B cell (primary cell): ENCODE measurements at regions of chr1 and their contacts with region 1.

Region 1: GRCh38 chr1:228131766-228132165 is 8.3 kb upstream of the GUK1 start:
- DNase-seq: no peak
- ATAC-seq: no peak
- H3K4me3 ChIP-seq: no peak overlapping the region
- H3K4me3 Mint-ChIP-seq: no peak overlapping the region
- H3K27ac ChIP-seq: no peak overlapping the region
- H3K27ac Mint-ChIP-seq: no peak overlapping the region
- H3K4me1 ChIP-seq: peaks cover 2 to 10% of the 10 kb centered on the region in 2 donors
- H3K4me1 Mint-ChIP-seq: peaks cover 14% of the 10 kb centered on the region
- H3K27me3 ChIP-seq: peaks cover 0 to 3% (median 1%) of the 10 kb centered on the region in 4 experiments
- H3K27me3 Mint-ChIP-seq: peaks cover 17% of the 10 kb centered on the region
- CTCF ChIP-seq: no peak

Region 2: DNA sequence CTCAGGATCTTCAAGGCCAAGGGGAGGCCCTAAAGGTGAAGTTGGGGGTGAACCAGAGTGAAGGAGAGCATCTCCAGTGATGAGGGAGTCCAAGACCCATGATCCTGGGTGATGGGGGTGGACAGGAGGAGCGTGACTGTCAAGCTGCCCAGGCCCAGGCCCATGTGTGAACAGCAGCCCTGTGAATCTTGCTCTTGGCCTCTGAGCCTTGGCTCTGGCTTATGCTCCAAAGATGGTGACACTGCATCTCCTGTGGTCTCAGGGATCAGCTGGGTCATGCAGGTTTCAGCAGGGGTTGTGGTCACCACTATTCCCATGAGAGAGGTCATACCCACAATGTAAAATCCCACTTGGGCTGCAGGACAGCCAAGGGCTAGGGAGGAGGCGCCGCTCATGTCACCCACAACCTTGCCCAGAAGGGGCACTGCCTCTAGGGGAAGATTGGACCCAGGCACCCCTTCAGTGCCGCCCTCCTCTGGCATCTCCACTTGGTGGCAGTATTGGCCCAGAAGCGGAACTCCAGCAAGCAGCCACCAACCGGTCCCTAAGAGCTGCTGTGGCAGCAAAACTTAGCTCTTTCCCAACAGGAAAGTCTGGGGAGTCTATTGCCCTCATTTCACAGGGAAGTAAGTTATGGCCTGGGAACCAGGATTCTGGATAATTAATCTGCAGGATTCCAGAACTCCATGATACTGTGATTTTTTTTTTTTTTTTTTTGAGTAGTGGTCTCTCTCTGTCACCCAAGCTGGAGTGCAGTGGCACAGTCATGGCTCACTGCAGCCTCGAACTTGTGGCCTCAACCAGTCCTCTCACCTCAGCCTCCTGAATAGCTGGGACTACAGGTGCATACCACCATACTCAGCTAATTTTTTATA is 132.5 kb before region 1 on chr1:
- CTCF ChIA-PET with region 1: interaction called, 12 read pairs
- POLR2A ChIA-PET with region 1: no interaction called
- intact Hi-C with region 1: no loop called
- DNase-seq: peak; percentile 71
- ATAC-seq: peak; percentile 82
- H3K4me3 ChIP-seq: no peak overlapping the region
- H3K4me3 Mint-ChIP-seq: no peak overlapping the region
- H3K27ac ChIP-seq: no peak overlapping the region
- H3K27ac Mint-ChIP-seq: no peak overlapping the region
- H3K4me1 ChIP-seq: no peaks in the 10 kb centered on the region
- H3K4me1 Mint-ChIP-seq: no peaks in the 10 kb centered on the region
- H3K27me3 ChIP-seq: peaks cover 0 to 20% (median 10%) of the 10 kb centered on the region in 4 experiments
- H3K27me3 Mint-ChIP-seq: peaks cover 29% of the 10 kb centered on the region
- CTCF ChIP-seq: peak; percentile 72

Region 3: DNA sequence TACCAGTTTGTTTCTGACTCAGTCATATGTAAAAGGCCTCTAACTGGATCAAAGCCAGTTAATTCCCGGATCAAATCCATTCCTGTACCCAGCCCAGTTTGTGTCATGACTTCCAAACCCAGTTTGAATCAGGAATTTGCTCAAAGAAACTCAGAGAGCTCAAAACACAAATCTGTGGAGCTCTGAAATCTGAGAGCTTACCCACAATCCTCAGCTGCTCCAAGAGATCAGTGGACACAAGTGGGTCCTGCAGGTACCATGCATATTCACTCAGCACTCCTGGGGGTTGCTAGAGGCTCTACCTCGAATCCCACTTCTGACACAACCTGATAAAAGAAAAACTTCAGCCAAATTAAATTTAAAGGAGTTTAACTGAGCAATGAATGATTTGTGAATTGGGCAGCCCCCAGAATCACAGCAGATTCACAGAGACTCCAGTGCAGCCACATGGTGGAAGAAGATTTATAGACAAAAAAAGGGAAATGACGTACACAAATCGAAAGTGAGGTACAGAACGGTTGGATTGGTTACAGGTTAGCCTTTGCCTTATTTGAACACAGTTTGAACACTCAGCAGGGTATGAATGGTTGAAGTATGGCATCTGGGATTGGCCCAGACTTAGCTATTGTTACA is 10.8 kb before region 1 on chr1:
- CTCF ChIA-PET with region 1: interaction called, 18 read pairs
- POLR2A ChIA-PET with region 1: no interaction called
- intact Hi-C with region 1: no loop called
- DNase-seq: peak; percentile 63
- ATAC-seq: peak; percentile 60
- H3K4me3 ChIP-seq: no peak overlapping the region
- H3K4me3 Mint-ChIP-seq: peak overlapping the region; percentile 8
- H3K27ac ChIP-seq: no peak overlapping the region
- H3K27ac Mint-ChIP-seq: no peak overlapping the region
- H3K4me1 ChIP-seq: peaks cover 10 to 11% of the 10 kb centered on the region in 2 donors
- H3K4me1 Mint-ChIP-seq: peaks cover 5% of the 10 kb centered on the region
- H3K27me3 ChIP-seq: no peaks in the 10 kb centered on the region
- H3K27me3 Mint-ChIP-seq: no peaks in the 10 kb centered on the region
- CTCF ChIP-seq: no peak

Region 4: DNA sequence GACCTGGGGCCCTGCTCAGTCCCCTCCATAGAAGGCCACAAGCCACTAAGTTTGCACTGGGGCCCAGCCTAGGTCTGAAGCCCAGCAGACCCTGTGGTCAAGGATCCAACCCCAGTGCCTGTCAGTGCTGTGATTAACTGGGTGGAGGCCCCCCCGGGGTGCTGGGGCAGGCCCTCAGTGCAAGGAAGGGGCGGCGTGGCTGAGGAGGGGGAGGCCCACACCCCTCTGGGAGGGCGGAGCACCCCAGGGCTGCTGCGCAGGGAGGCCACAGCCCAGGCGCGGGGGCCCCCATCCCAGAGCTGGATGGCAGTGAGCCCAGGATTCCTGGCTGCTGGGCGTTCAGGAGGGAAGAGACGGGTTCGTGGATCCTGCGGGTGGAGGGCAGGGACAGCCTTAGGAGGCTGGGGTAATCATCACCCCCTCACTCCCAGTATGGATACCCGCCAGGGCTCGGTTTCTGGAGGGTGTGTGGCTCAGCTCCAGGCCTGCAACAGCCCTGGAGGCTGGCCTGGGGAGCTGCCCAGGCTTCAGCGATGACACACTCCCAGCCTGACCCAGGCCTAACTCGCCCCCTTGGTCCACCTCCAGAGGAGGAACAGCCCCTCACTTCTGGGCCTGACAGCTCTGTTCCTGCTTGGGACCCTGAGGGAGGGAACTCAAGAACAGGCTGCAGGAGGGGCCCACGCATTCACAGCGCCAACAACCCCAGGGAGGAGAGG is 18.9 kb after region 1 on chr1:
- CTCF ChIA-PET with region 1: no interaction called
- POLR2A ChIA-PET with region 1: no interaction called
- intact Hi-C with region 1: no loop called
- DNase-seq: no peak
- ATAC-seq: no peak
- H3K4me3 ChIP-seq: no peak overlapping the region
- H3K4me3 Mint-ChIP-seq: no peak overlapping the region
- H3K27ac ChIP-seq: no peak overlapping the region
- H3K27ac Mint-ChIP-seq: no peak overlapping the region
- H3K4me1 ChIP-seq: no peaks in the 10 kb centered on the region
- H3K4me1 Mint-ChIP-seq: no peaks in the 10 kb centered on the region
- H3K27me3 ChIP-seq: no peaks in the 10 kb centered on the region
- H3K27me3 Mint-ChIP-seq: no peaks in the 10 kb centered on the region
- CTCF ChIP-seq: no peak

Region 5: GRCh38 chr1:228165372-228166169 is 33.8 kb after region 1 on chr1 and contains the start of gene IBA57:
- CTCF ChIA-PET with region 1: interaction called, 73 read pairs
- POLR2A ChIA-PET with region 1: interaction called, 5 read pairs
- intact Hi-C with region 1: loop called (anchors 2 kb)
- DNase-seq: peak; percentile 100
- ATAC-seq: peak; percentile 84
- H3K4me3 ChIP-seq: peak within 1 kb of the TSS; percentile 64 to 88 (median 74)
- H3K4me3 Mint-ChIP-seq: peak within 1 kb of the TSS; percentile 93
- H3K27ac ChIP-seq: peak within 1 kb of the TSS; percentile 95 to 98
- H3K27ac Mint-ChIP-seq: peak within 1 kb of the TSS; percentile 99
- H3K4me1 ChIP-seq: peaks cover 14 to 26% of the 10 kb centered on the region in 2 donors
- H3K4me1 Mint-ChIP-seq: peaks cover 28% of the 10 kb centered on the region
- H3K27me3 ChIP-seq: peaks cover 0 to 5% (median 0%) of the 10 kb centered on the region in 4 experiments
- H3K27me3 Mint-ChIP-seq: no peaks in the 10 kb centered on the region
- CTCF ChIP-seq: peak; percentile 73
- total RNA-seq, gene IBA57: 12.8 and 15.3 TPM in 2 replicates

Region 6: GRCh38 chr1:228515200-228515834 is 383.6 kb after region 1 on chr1:
- CTCF ChIA-PET with region 1: interaction called, 8 read pairs
- POLR2A ChIA-PET with region 1: no interaction called
- intact Hi-C with region 1: loop called (anchors 1 kb)
- DNase-seq: peak; percentile 64
- ATAC-seq: peak; percentile 28
- H3K4me3 ChIP-seq: no peak overlapping the region
- H3K4me3 Mint-ChIP-seq: no peak overlapping the region
- H3K27ac ChIP-seq: no peak overlapping the region
- H3K27ac Mint-ChIP-seq: no peak overlapping the region
- H3K4me1 ChIP-seq: no peaks in the 10 kb centered on the region
- H3K4me1 Mint-ChIP-seq: no peaks in the 10 kb centered on the region
- H3K27me3 ChIP-seq: peaks cover 0 to 17% (median 4%) of the 10 kb centered on the region in 4 experiments
- H3K27me3 Mint-ChIP-seq: peaks cover 38% of the 10 kb centered on the region
- CTCF ChIP-seq: peak; percentile 82